ENCODE measurements at regions of chr14 and their contacts with region 1.

Region 1: DNA sequence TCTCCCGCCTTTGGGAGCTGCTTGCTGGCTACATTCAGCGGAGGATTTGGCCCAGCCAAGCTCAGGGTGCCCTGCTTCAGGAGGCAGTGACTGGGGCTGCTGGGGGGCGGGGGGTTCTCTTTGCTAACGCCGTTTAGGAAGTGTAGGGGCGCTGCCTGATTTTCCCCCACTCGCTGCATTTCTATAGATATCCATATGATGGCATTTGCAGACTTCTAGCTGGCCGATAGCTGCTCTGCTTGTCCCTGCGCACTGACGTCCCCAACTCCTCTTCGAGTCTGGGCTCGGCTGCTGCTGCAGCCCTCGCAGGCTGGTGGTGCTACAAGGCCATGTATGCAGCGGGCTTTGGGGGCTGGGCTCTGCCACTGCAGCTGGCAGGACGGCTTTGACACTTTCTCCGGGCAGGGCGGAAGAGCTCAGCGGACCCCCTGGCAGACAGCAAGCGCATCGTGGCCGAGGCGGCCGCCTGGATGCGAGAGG is 3.1 kb downstream of the LRFN5 start:
- DNase-seq: no peak
- ATAC-seq: peak; percentile 84
- H3K4me3 ChIP-seq: peak overlapping the region; percentile 62 to 84
- H3K27ac ChIP-seq: peak overlapping the region; percentile 88
- H3K4me1 ChIP-seq: peaks cover 9% of the 10 kb centered on the region
- H3K27me3 ChIP-seq: no peaks in the 10 kb centered on the region
- CTCF ChIP-seq: peak; percentile 82

Region 2: DNA sequence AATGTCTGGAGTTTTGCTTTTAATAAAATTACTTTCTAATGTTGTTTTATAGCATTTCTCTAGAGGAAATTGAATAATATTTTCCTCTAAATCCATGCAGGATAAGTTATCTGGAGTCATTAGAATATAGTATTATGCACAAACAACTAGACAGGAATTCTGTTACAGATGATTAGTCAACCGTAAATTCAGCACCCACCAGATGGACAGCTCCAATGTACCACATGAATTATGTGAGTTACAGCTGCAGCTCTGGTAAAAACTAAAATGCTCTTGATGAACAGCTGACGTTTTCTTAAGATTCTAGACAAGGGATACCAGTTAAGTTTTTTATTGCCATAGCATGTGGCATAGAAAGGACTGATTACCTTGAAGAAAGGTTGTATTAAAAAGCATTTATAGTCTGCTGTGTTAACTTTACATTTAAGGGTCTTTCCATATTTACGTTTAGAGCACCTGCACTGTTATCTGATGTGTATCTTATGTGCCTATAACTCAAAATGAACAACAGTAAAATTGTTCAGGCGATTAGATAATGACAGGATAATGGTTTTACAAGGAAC is 324.5 kb before region 1 on chr14:
- CTCF ChIA-PET with region 1: no interaction called
- POLR2A ChIA-PET with region 1: no interaction called
- in situ Hi-C with region 1: no loop called
- intact Hi-C with region 1: loop called (anchors 10 kb)
- DNase-seq: no peak
- ATAC-seq: no peak
- H3K4me3 ChIP-seq: no peak overlapping the region
- H3K27ac ChIP-seq: no peak overlapping the region
- H3K4me1 ChIP-seq: no peaks in the 10 kb centered on the region
- H3K27me3 ChIP-seq: no peaks in the 10 kb centered on the region
- CTCF ChIP-seq: no peak

Region 3: DNA sequence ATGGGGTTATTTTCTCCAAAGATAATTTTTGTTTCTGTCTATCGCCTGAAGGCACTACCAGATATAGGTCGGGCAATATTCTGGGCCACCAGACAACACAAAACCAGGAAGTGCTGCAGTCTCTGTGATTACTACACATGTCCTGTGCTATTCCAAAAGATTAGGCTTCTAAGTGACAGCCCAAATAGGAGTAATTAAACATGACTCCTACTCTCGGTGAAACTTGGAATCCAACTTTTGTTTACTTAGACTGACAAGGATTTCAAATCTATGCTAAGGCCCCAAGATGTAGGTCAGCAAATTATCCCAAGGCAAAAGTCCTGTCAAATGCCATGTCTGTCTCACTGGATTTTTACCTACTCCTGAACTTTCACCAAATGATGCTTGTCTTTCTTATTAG is 160.7 kb before region 1 on chr14:
- CTCF ChIA-PET with region 1: no interaction called
- POLR2A ChIA-PET with region 1: no interaction called
- in situ Hi-C with region 1: no loop called
- intact Hi-C with region 1: no loop called
- DNase-seq: no peak
- ATAC-seq: no peak
- H3K4me3 ChIP-seq: no peak overlapping the region
- H3K27ac ChIP-seq: no peak overlapping the region
- H3K4me1 ChIP-seq: no peaks in the 10 kb centered on the region
- H3K27me3 ChIP-seq: no peaks in the 10 kb centered on the region
- CTCF ChIP-seq: no peak

Region 4: DNA sequence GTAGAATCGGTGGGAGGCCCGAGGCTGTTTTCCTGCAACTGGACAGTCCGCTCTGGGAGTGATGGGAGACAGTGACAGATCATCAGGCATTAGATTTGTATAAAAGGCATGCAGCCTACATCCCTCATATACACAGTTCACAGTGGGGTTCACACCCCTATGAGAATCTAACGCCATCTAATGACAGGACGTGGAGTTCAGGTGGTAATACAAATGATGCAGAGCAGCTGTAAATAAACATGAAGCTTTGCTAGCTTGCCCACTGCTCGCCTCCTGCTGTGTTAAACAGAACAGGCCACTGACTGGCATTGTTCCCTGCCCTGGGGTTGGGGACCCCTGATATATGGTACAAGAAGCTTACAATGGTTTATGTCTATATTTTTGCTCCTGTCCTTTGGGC is 176.0 kb after region 1 on chr14:
- CTCF ChIA-PET with region 1: interaction called, 3 read pairs
- POLR2A ChIA-PET with region 1: no interaction called
- in situ Hi-C with region 1: no loop called
- intact Hi-C with region 1: loop called (anchors 10 kb)
- DNase-seq: peak; percentile 4
- ATAC-seq: peak; percentile 66; the same call in 1 of the 2 replicates
- H3K4me3 ChIP-seq: no peak overlapping the region
- H3K27ac ChIP-seq: no peak overlapping the region
- H3K4me1 ChIP-seq: peaks cover 4% of the 10 kb centered on the region; the same call in 1 of the 2 replicates
- H3K27me3 ChIP-seq: no peaks in the 10 kb centered on the region
- CTCF ChIP-seq: peak; percentile 64

Region 5: DNA sequence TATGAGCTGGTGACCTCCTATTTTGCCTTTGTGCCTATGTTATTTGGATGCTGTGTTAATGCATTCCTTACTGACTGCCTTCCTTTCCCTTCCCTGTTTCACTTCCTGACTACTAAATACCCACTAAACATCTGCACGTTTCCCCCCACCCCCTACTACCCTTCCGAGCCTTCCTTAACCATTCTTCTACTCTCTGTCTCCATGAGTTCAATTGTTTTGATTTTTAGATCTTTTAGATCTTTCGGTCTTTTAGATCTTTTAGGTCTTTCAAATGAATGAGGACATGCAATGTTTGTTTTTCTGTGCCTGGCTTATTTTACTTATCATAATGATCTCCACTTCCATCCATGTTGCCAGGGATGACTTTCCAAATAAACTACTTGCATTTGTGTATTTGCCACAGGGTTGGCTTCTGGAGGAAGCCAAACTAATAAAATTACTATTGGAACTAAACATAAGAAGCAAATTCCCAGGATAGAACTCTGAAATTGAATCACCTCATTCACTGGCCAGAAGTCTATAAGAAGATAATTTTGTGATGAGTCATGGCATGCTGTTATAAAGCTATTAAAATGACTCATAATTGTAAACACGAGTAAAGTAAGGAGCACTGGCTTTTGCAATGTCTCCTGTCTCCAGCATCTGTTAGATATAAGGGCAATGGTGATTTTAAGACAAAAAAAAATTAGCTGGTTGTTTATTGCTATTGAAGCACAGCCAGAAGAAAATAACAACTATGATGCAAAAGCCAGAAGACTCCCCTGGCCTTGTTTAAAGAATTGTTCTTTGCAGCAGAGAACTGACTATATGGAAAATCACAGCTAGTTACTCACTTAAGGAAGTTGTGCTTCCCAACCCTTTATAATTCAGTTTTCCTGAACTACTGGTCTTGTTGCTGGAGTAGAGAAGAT is 583.3 kb after region 1 on chr14:
- CTCF ChIA-PET with region 1: no interaction called
- POLR2A ChIA-PET with region 1: no interaction called
- in situ Hi-C with region 1: no loop called
- intact Hi-C with region 1: loop called (anchors 10 kb)
- DNase-seq: peak; percentile 81
- ATAC-seq: peak; percentile 97
- H3K4me3 ChIP-seq: 0 out of 4 replicates have a peak overlapping the region, but pooled peaks of 1 of the 2 experiments have one; percentile 2
- H3K27ac ChIP-seq: peak overlapping the region; percentile 95
- H3K4me1 ChIP-seq: peaks cover 17% of the 10 kb centered on the region
- H3K27me3 ChIP-seq: no peaks in the 10 kb centered on the region
- CTCF ChIP-seq: no peak